Endothelial cell of umbilical vein (primary cell): ENCODE measurements at regions of chr14 and their contacts with region 1.

Region 1: GRCh38 chr14:61561657-61562276 is 133.5 kb upstream of the HIF1A start:
- DNase-seq: peak; percentile 99
- H3K4me3 ChIP-seq: no peak overlapping the region
- H3K27ac ChIP-seq: peak overlapping the region; percentile 99
- H3K4me1 ChIP-seq: peaks cover 56% of the 10 kb centered on the region
- H3K27me3 ChIP-seq: no peaks in the 10 kb centered on the region
- CTCF ChIP-seq: no peak
- POLR2A ChIP-seq: peak; percentile 77

Region 2: DNA sequence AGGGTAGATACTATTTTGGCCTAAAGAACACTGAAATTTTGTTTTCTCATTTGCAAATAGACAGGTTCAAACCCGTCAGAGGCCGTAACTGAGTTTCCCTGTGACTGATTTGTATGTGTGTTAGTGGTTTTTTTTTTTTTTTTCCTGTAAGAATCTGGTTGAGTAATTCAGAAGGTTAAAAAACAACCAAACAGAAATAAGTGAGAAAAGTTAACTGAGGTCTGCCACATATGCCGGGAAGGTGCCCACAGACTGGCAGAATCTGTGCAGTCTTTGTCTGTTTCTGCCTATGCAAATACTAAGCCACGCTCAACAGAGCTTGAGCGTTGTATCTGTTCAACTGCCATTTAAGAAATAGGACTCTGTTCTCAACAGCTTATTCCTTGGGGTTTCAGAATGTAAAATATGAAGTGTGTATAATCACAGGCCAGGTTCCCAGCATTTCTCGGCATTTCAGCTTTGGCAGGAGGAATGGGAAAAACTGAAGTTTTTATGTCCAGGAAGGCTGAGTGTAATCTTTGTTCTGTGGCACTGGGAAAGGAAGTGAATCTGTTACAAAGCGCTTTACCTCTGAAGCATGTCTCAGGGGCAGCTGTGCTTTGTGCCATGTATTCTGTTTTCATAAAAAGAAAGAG is 58.5 kb before region 1 on chr14:
- CTCF ChIA-PET with region 1: no interaction called
- POLR2A ChIA-PET with region 1: no interaction called
- dilution Hi-C with region 1: no loop called
- intact Hi-C with region 1: no loop called
- DNase-seq: peak; percentile 93
- H3K4me3 ChIP-seq: peak overlapping the region in 1 of 3 experiments; percentile 15
- H3K27ac ChIP-seq: peak overlapping the region; percentile 81
- H3K4me1 ChIP-seq: peaks cover 27% of the 10 kb centered on the region
- H3K27me3 ChIP-seq: no peaks in the 10 kb centered on the region
- CTCF ChIP-seq: no peak
- POLR2A ChIP-seq: no peak

Region 3: GRCh38 chr14:61525293-61526011 is 36.3 kb before region 1 on chr14:
- CTCF ChIA-PET with region 1: interaction called, 8 read pairs
- POLR2A ChIA-PET with region 1: interaction called, 3 read pairs
- dilution Hi-C with region 1: no loop called
- intact Hi-C with region 1: loop called (anchors 1 kb)
- DNase-seq: peak; percentile 88
- H3K4me3 ChIP-seq: peak overlapping the region in 1 of 3 experiments; percentile 6
- H3K27ac ChIP-seq: peak overlapping the region; percentile 89
- H3K4me1 ChIP-seq: peaks cover 55% of the 10 kb centered on the region
- H3K27me3 ChIP-seq: no peaks in the 10 kb centered on the region
- CTCF ChIP-seq: no peak
- POLR2A ChIP-seq: no peak

Region 4: GRCh38 chr14:61585598-61586543 is 24.1 kb after region 1 on chr14:
- CTCF ChIA-PET with region 1: interaction called, 10 read pairs
- POLR2A ChIA-PET with region 1: interaction called, 3 read pairs
- dilution Hi-C with region 1: no loop called
- intact Hi-C with region 1: loop called (anchors 1 kb)
- DNase-seq: peak; percentile 91
- H3K4me3 ChIP-seq: no peak overlapping the region
- H3K27ac ChIP-seq: peak overlapping the region; percentile 22
- H3K4me1 ChIP-seq: peaks cover 17% of the 10 kb centered on the region
- H3K27me3 ChIP-seq: no peaks in the 10 kb centered on the region
- CTCF ChIP-seq: no peak
- POLR2A ChIP-seq: no peak

Region 5: DNA sequence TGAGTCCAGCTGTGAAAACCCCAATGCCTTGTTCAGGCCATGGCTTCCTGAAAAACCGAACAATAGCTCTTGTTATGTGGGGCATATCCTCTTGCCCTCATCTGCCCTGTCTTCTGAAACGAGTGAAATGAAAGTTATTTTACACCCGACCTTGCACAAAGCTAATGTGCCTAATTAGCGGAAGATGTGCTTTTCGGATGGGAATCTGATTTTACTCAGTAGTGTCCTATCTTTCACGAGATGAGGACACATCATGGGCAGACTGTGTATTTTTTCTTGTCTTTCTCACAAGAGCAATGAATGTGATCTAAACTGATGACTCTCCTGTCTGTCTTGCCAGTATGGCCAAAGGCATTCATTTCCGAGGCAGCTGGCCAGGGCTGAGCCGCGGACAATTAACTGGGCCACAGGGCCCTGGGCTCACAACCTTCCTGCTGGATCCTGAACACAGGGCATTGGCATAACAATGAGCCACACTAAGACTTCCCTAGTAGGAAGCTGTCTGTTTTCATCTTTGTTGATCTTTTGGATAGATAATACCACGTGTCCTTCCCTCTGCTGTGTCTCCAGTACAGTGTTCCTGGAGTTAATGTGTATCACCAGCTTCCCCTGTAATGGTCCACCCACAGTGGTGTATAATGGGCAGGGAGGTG is 47.5 kb after region 1 on chr14:
- CTCF ChIA-PET with region 1: interaction called, 8 read pairs
- POLR2A ChIA-PET with region 1: interaction called, 3 read pairs
- dilution Hi-C with region 1: no loop called
- intact Hi-C with region 1: loop called (anchors 1 kb)
- DNase-seq: peak; percentile 87
- H3K4me3 ChIP-seq: peak overlapping the region in 1 of 3 experiments; percentile 3
- H3K27ac ChIP-seq: peak overlapping the region; percentile 74
- H3K4me1 ChIP-seq: peaks cover 24% of the 10 kb centered on the region
- H3K27me3 ChIP-seq: no peaks in the 10 kb centered on the region
- CTCF ChIP-seq: no peak
- POLR2A ChIP-seq: no peak

Region 6: GRCh38 chr14:61694830-61695694 is 133.3 kb after region 1 on chr14 and contains the start of gene HIF1A:
- CTCF ChIA-PET with region 1: interaction called, 4 read pairs
- POLR2A ChIA-PET with region 1: interaction called, 6 read pairs
- dilution Hi-C with region 1: no loop called
- intact Hi-C with region 1: loop called (anchors 1 kb)
- DNase-seq: peak; percentile 99
- H3K4me3 ChIP-seq: peak within 1 kb of the TSS; percentile 88 to 100 (median 99)
- H3K27ac ChIP-seq: peak within 1 kb of the TSS; percentile 84
- H3K4me1 ChIP-seq: peaks cover 30% of the 10 kb centered on the region
- H3K27me3 ChIP-seq: no peaks in the 10 kb centered on the region
- CTCF ChIP-seq: peak in 1 of 2 donors; percentile 12
- POLR2A ChIP-seq: peak; percentile 97
- total RNA-seq, gene HIF1A: 179 and 180 TPM in 2 replicates

Region 7: GRCh38 chr14:61730756-61731373 is 169.1 kb after region 1 on chr14:
- CTCF ChIA-PET with region 1: interaction called, 5 read pairs
- POLR2A ChIA-PET with region 1: no interaction called
- dilution Hi-C with region 1: no loop called
- intact Hi-C with region 1: loop called (anchors 1 kb)
- DNase-seq: peak; percentile 54
- H3K4me3 ChIP-seq: no peak overlapping the region
- H3K27ac ChIP-seq: no peak overlapping the region
- H3K4me1 ChIP-seq: no peaks in the 10 kb centered on the region
- H3K27me3 ChIP-seq: no peaks in the 10 kb centered on the region
- CTCF ChIP-seq: peak; percentile 2 to 18
- POLR2A ChIP-seq: no peak